ENCODE measurements at regions of chr2 and their contacts with region 1.

Region 1: GRCh38 chr2:176096986-176097819 is 2.4 kb upstream of the HOXD12 start:
- DNase-seq: peak; percentile 68 to 70 (median 69)
- ATAC-seq: peak; percentile 93 to 97 (median 94)
- H3K4me3 ChIP-seq: peak overlapping the region; percentile 16 to 41 (median 29)
- H3K27ac ChIP-seq: no peak overlapping the region
- H3K4me1 ChIP-seq: peaks cover 0 to 23% (median 6%) of the 10 kb centered on the region in 4 donors
- H3K27me3 ChIP-seq: peaks cover 22 to 92% of the 10 kb centered on the region in 2 donors
- CTCF ChIP-seq: peak; percentile 76 to 91 (median 86)
- POLR2A ChIP-seq: no peak

Region 2: DNA sequence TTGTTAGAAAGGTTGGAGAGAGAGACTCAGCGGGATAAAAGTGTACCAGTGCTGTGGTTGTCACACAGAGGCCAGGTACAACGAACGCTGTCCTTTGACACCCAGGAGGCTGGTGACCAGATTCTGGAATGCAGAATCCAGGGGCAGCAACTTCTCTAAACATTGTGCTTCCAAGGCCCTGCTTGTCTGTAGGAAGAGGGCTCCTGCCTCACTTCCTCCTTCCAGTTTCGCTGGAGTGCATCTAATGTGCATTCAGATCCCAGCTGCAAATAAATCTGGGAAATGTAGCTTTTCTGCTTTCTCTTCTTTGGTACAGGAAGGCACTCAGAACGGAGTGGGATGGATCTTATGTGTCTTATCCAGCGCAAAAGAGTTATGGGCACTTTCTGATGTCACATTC is 743.9 kb before region 1 on chr2:
- intact Hi-C with region 1: loop called in 1 of 2 experiments (anchors 10 kb)
- DNase-seq: no peak
- ATAC-seq: peak in 2 of 4 donors; percentile 22 to 50
- H3K4me3 ChIP-seq: no peak overlapping the region
- H3K27ac ChIP-seq: no peak overlapping the region
- H3K4me1 ChIP-seq: no peaks in the 10 kb centered on the region
- H3K27me3 ChIP-seq: peaks cover 0 to under 1% of the 10 kb centered on the region in 2 donors
- CTCF ChIP-seq: no peak
- POLR2A ChIP-seq: no peak

Region 3: DNA sequence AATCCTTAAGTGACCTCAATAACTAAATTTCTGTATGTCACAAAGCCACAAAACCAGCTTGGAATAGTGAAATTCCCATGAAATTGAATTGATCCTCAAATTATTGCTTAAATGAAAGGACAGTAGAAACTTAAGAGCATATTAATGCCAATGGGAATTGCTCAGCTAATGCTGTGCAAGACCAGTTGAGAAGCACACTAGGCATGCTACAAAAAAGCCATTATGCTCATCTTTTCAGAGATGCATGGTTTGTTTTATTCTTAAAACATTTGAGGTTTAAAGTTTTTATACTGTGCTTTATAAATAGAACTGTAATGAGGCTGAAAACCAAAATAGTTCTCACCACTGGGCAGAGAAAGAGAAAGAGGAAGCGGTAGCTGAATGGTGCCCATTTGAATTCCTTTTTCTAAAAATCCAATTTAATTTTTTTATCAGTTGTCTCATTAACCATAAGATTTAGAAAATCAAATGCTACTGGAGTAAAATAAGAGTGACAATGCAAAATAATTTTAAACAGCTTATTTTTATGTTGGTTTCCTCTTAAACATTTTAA is 193.7 kb before region 1 on chr2:
- intact Hi-C with region 1: no loop called
- DNase-seq: no peak
- ATAC-seq: no peak
- H3K4me3 ChIP-seq: no peak overlapping the region
- H3K27ac ChIP-seq: no peak overlapping the region
- H3K4me1 ChIP-seq: no peaks in the 10 kb centered on the region
- H3K27me3 ChIP-seq: no peaks in the 10 kb centered on the region
- CTCF ChIP-seq: no peak
- POLR2A ChIP-seq: no peak

Measured in right lobe of liver (tissue), 6 donors.